ENCODE measurements at regions of chr1 and their contacts with region 1.

Region 1: GRCh38 chr1:53238197-53239155 is at the start of gene MAGOH:
- H3K4me3 Mint-ChIP-seq: peak within 1 kb of the TSS; percentile 99
- H3K27ac Mint-ChIP-seq: peak within 1 kb of the TSS; percentile 98
- H3K4me1 Mint-ChIP-seq: peaks cover 30% of the 10 kb centered on the region
- H3K27me3 Mint-ChIP-seq: no peaks in the 10 kb centered on the region

Region 2: DNA sequence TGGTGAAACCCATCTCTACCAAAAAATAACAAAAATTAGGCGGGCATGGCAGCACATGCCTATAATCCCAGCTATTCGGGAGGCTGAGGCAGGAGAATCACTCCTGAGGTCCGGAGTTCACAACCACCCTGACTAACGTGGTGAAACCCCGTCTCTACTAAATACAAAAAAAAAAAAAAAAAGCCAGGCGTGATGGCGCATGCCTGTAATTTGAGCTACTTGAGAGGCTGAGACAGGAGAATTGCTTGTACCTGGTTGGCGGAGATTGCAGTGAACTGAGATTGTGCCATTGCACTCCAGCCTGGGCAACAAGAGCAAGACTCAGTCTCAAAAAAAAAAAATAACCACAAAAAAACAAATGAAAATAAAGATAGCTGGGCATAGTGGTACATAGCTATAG is 914.7 kb before region 1 on chr1:
- intact Hi-C with region 1: no loop called
- H3K4me3 Mint-ChIP-seq: no peak overlapping the region
- H3K27ac Mint-ChIP-seq: no peak overlapping the region
- H3K4me1 Mint-ChIP-seq: no peaks in the 10 kb centered on the region
- H3K27me3 Mint-ChIP-seq: peaks cover 2% of the 10 kb centered on the region

Region 3: GRCh38 chr1:53196485-53197270 is 41.8 kb before region 1 on chr1 and contains the start of gene CPT2:
- intact Hi-C with region 1: loop called (anchors 1 kb)
- H3K4me3 Mint-ChIP-seq: peak within 1 kb of the TSS; percentile 91
- H3K27ac Mint-ChIP-seq: peak within 1 kb of the TSS; percentile 92
- H3K4me1 Mint-ChIP-seq: peaks cover 26% of the 10 kb centered on the region
- H3K27me3 Mint-ChIP-seq: no peaks in the 10 kb centered on the region

Region 4: GRCh38 chr1:53220171-53220961 is 18.1 kb before region 1 on chr1 and contains the start of gene CZIB:
- intact Hi-C with region 1: loop called (anchors 1 kb)
- H3K4me3 Mint-ChIP-seq: peak within 1 kb of the TSS; percentile 92
- H3K27ac Mint-ChIP-seq: peak within 1 kb of the TSS; percentile 97
- H3K4me1 Mint-ChIP-seq: peaks cover 30% of the 10 kb centered on the region
- H3K27me3 Mint-ChIP-seq: no peaks in the 10 kb centered on the region

Region 5: GRCh38 chr1:53266106-53266505 is 27.6 kb after region 1 on chr1:
- intact Hi-C with region 1: no loop called
- H3K4me3 Mint-ChIP-seq: no peak overlapping the region
- H3K27ac Mint-ChIP-seq: no peak overlapping the region
- H3K4me1 Mint-ChIP-seq: no peaks in the 10 kb centered on the region
- H3K27me3 Mint-ChIP-seq: no peaks in the 10 kb centered on the region

Region 6: GRCh38 chr1:53303726-53304515 is 65.4 kb after region 1 on chr1:
- intact Hi-C with region 1: no loop called
- H3K4me3 Mint-ChIP-seq: no peak overlapping the region
- H3K27ac Mint-ChIP-seq: no peak overlapping the region
- H3K4me1 Mint-ChIP-seq: peaks cover 30% of the 10 kb centered on the region
- H3K27me3 Mint-ChIP-seq: no peaks in the 10 kb centered on the region